ENCODE measurements at regions of chr16 and their contacts with region 1.

Region 1: GRCh38 chr16:15833541-15833940 is 23.3 kb downstream of the MYH11 start:
- DNase-seq: no peak
- H3K4me3 ChIP-seq: no peak overlapping the region
- H3K27ac ChIP-seq: no peak overlapping the region
- H3K4me1 ChIP-seq: no peaks in the 10 kb centered on the region
- H3K27me3 ChIP-seq: no peaks in the 10 kb centered on the region
- CTCF ChIP-seq: no peak

Region 2: GRCh38 chr16:15773968-15774367 is 59.6 kb before region 1 on chr16:
- CTCF ChIA-PET with region 1: interaction called, 12 read pairs
- POLR2A ChIA-PET with region 1: no interaction called
- intact Hi-C with region 1: no loop called
- DNase-seq: no peak
- H3K4me3 ChIP-seq: no peak overlapping the region
- H3K27ac ChIP-seq: no peak overlapping the region
- H3K4me1 ChIP-seq: no peaks in the 10 kb centered on the region
- H3K27me3 ChIP-seq: peaks cover 3% of the 10 kb centered on the region
- CTCF ChIP-seq: no peak

Measured in A673 (cell line).